ENCODE measurements at regions of chr2 and their contacts with region 1.

Region 1: DNA sequence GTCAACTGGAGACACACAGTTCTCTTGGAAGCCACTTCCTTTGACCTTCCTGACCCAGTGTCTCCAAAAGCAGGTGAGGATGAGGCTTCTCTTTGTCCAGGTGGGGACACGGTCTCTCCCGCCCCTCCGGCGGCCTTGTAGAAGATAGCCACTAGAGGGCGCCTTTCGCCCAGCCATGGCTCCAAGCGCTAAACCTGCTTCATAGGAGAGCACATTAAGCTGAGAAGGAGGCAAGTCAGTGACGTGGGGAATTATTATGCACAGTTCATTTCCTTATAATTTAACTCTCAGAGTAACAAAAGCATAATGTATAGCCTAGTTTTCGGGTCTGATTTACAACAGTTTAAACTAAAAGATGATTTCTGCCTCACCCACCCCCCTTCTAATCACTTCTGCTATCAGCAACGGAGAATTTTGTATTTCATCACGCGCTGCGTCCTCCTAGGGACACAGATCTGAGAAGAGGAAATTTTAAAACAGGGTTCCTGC is 208.7 kb downstream of the ICOS start:
- DNase-seq: peak; percentile 94
- H3K4me3 Mint-ChIP-seq: peak overlapping the region; percentile 86
- H3K27ac Mint-ChIP-seq: peak overlapping the region; percentile 26
- H3K4me1 Mint-ChIP-seq: peaks cover 15% of the 10 kb centered on the region
- H3K27me3 Mint-ChIP-seq: peaks cover 35% of the 10 kb centered on the region

Region 2: GRCh38 chr2:203972066-203972465 is 173.2 kb before region 1 on chr2:
- intact Hi-C with region 1: no loop called
- DNase-seq: no peak
- H3K4me3 Mint-ChIP-seq: no peak overlapping the region
- H3K27ac Mint-ChIP-seq: no peak overlapping the region
- H3K4me1 Mint-ChIP-seq: peaks cover 13% of the 10 kb centered on the region
- H3K27me3 Mint-ChIP-seq: no peaks in the 10 kb centered on the region

Region 3: GRCh38 chr2:204060841-204061240 is 84.5 kb before region 1 on chr2:
- intact Hi-C with region 1: no loop called
- DNase-seq: no peak
- H3K4me3 Mint-ChIP-seq: no peak overlapping the region
- H3K27ac Mint-ChIP-seq: no peak overlapping the region
- H3K4me1 Mint-ChIP-seq: no peaks in the 10 kb centered on the region
- H3K27me3 Mint-ChIP-seq: peaks cover 4% of the 10 kb centered on the region

Region 4: DNA sequence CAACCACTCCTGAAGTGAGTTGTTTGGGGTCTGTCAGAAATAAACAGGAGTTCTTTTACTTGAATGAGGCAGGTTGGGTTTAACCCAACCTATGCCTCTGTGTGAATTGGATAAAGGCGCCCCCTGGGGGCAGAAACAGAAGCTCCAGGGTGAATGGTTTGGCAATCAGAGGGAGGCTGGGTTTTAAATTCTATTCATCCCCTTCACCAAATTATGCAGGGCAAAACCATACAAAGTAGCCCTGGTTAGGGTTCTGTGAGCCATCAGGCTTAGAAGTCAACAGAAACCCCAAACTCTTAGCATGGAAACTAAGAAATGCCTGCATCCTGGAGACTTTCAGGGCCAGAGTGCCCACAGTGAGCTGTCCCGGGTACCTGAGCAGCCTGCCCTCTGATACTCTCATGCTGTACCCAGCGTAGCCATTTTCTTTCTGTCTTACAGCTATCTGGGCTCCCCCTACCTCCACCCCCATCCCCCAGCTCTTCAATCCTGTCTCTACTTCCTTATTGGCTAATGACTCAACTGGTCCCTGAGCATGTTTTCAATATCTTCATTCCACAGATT is 32.8 kb after region 1 on chr2:
- intact Hi-C with region 1: loop called (anchors 1 kb)
- DNase-seq: peak; percentile 90
- H3K4me3 Mint-ChIP-seq: no peak overlapping the region
- H3K27ac Mint-ChIP-seq: no peak overlapping the region
- H3K4me1 Mint-ChIP-seq: peaks cover 7% of the 10 kb centered on the region
- H3K27me3 Mint-ChIP-seq: peaks cover 32% of the 10 kb centered on the region

Region 5: GRCh38 chr2:204251158-204251997 is 106.1 kb after region 1 on chr2:
- intact Hi-C with region 1: loop called (anchors 10 kb)
- DNase-seq: no peak
- H3K4me3 Mint-ChIP-seq: no peak overlapping the region
- H3K27ac Mint-ChIP-seq: no peak overlapping the region
- H3K4me1 Mint-ChIP-seq: no peaks in the 10 kb centered on the region
- H3K27me3 Mint-ChIP-seq: peaks cover 24% of the 10 kb centered on the region

Region 6: DNA sequence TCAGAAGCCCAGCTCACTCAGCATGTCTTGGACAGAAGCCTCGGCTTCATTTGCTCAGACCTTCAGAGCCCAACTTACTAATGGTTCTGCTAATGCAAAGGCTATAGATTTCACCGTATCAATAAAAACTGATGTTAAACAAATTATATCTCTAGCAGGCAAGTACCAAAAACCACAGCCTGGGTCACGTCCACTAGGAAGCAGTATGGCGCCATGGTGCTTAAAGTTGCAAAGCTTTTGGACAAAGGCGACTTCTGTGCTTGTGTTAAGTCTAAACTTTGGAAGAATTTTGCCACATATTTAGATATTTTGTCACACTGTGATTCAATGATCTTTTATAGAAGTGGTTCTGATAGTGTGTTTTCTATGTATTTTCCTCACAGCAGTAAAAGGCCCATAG is 123.2 kb after region 1 on chr2:
- intact Hi-C with region 1: no loop called
- DNase-seq: no peak
- H3K4me3 Mint-ChIP-seq: no peak overlapping the region
- H3K27ac Mint-ChIP-seq: no peak overlapping the region
- H3K4me1 Mint-ChIP-seq: no peaks in the 10 kb centered on the region
- H3K27me3 Mint-ChIP-seq: peaks cover 28% of the 10 kb centered on the region

Region 7: DNA sequence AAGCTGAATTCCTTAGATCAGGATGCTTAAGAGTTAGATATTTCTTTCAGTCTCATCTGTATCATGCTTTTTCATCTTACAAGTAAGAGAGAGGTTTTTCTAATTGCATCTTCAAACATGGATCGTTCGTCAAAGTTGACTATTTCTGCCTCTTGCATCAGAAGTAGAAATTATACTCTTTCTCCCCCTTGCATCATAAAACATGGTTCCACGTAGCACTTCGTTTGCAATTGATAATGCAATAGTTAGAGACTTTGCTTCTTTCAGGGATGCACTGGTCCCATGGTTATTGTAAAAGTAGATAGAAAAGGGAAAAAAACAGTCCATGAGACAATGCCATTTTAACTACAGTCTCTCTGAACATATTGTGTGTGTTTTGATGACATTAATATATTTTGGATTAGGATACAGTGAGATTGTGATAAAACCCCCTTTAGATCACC is 324.9 kb after region 1 on chr2:
- intact Hi-C with region 1: no loop called
- DNase-seq: no peak
- H3K4me3 Mint-ChIP-seq: no peak overlapping the region
- H3K27ac Mint-ChIP-seq: no peak overlapping the region
- H3K4me1 Mint-ChIP-seq: no peaks in the 10 kb centered on the region
- H3K27me3 Mint-ChIP-seq: peaks cover 5% of the 10 kb centered on the region

Measured in activated CD4-positive, alpha-beta T cell treated with anti-CD3 and anti-CD28 coated beads, Interleukin-2, amount 10 ng/mL, durations not matched to agents 24 days and 14 days (primary cell).